Uterus (tissue), 4 donors: ENCODE measurements at regions of chr3 and their contacts with region 1.

Region 1: GRCh38 chr3:38165681-38166392 is 500 bp downstream of the OXSR1 start:
- DNase-seq: peak in 1 of 2 donors; percentile 55
- H3K4me3 ChIP-seq: peak overlapping the region; percentile 89 to 90
- H3K27ac ChIP-seq: peak overlapping the region; percentile 92 to 95
- H3K4me1 ChIP-seq: peaks cover 0 to 4% of the 10 kb centered on the region in 2 donors
- H3K27me3 ChIP-seq: no peaks in the 10 kb centered on the region
- CTCF ChIP-seq: no peak
- POLR2A ChIP-seq: no peak

Region 2: DNA sequence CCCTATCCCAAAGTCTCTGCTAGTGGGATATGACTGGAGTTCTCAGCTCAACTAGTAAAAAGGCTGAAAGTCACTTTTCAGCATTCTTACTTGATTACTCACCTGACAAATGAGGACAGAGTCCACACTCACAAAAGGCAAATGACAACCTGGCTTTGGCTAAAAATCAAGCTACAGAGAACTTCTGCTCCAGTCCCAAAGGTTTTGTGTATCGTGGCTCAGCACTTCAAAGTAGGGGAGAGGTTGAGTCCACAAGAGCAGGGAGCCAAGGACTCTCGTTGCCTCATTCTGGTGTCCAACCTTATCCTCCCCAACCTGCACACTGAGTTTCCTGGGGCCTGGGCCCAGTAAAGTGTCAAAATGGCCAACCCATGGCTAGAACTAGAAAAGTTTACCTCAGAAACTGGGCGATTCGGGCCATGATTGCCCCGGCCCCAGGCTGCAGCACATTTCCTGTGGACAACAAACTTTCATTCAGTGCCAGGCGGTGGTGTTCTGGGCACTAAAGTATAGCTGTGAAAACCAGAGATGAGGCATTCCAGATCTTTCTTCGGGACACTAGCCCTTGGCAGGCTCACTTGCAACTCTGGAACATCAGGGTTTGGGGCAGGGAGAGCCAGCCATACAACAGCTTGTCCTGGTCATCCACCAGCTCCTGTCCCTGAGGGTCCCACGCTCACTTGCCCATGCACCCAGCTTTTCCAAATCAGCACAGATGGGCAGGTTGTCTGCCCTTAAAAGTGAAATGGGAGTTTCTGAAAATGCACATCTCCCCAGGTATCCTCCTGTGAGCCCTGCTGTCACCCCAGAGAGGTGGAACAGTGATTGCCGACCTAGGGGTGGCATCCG is 32.1 kb before region 1 on chr3:
- intact Hi-C with region 1: loop called (anchors 2 kb)
- DNase-seq: no peak
- H3K4me3 ChIP-seq: no peak overlapping the region
- H3K27ac ChIP-seq: no peak overlapping the region
- H3K4me1 ChIP-seq: no peaks in the 10 kb centered on the region
- H3K27me3 ChIP-seq: no peaks in the 10 kb centered on the region
- CTCF ChIP-seq: no peak
- POLR2A ChIP-seq: no peak